ENCODE measurements at regions of chr1 and their contacts with region 1.

Region 1: DNA sequence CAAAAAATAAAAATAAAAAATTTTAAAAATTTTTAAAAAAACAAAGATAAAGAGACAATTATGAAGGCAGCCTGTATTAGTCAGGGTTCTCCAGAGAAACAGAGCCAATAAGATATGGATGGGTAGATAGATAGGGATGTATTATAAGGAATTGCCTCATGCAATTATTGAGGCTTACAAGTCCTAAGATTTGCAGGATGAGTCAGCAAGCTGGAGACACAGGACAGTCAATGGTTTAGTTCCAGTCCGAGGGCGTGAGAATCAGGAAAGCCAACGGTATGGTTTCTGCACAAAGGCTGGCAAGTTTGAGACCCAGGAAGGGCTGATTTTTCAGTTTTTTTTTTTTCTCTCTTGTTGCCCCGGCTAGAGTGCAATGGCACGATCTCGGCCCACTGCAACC is 24.1 kb upstream of the EIF4G3 start:
- DNase-seq: no peak
- ATAC-seq: no peak
- H3K4me3 ChIP-seq: no peak overlapping the region
- H3K27ac ChIP-seq: no peak overlapping the region
- H3K4me1 ChIP-seq: no peaks in the 10 kb centered on the region; the same call in 2 of the 3 replicates
- CTCF ChIP-seq: no peak
- EP300 ChIP-seq: no peak
- POLR2A ChIP-seq: no peak
- RAD21 ChIP-seq: no peak

Region 2: GRCh38 chr1:20981915-20982314 is 218.9 kb before region 1 on chr1:
- CTCF ChIA-PET with region 1: interaction called, 15 read pairs
- POLR2A ChIA-PET with region 1: no interaction called
- DNase-seq: peak in 1 of 2 experiments; percentile 14
- ATAC-seq: peak; percentile 70 to 81; a peak in 5 of 6 replicates
- H3K4me3 ChIP-seq: no peak overlapping the region
- H3K27ac ChIP-seq: no peak overlapping the region
- H3K4me1 ChIP-seq: peaks cover 8% of the 10 kb centered on the region; the same call in 1 of the 3 replicates
- CTCF ChIP-seq: peak; percentile 27; the same call in 2 of the 3 replicates
- EP300 ChIP-seq: no peak
- POLR2A ChIP-seq: no peak
- RAD21 ChIP-seq: peak; percentile 40 to 42; a peak in 4 of 5 replicates

Region 3: DNA sequence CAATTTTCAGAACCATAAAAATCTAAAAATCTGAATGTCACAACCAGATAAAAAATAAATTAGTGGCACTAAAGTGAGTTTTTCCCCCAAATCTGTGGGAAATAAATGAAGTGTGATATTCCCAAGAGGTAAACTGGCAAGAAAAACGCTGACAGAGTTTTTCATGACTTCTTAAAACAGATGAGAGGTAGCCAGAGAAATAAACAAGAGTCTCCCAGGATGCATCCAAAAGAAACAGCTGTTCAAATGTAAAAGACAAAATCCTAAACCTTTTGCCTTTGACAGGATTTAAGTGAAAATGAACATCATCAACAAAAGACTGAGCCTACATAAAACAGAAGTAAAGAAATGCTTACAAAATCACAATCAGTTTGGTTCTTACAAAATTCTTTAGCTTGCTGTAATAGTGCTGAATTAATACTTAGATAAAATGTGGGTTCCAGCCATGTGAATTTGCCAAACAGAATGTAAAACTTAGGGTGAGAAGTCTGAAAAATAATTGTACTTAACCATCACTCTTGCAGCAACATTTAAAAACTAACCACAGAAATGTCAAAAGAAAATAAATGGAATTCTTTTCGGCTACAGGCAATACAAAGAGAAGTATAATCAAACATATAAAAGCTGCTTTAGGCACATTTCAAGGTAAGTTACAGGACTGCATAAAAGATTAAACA is 157.7 kb before region 1 on chr1:
- CTCF ChIA-PET with region 1: no interaction called
- POLR2A ChIA-PET with region 1: no interaction called
- DNase-seq: no peak
- ATAC-seq: no peak
- H3K4me3 ChIP-seq: no peak overlapping the region
- H3K27ac ChIP-seq: no peak overlapping the region
- H3K4me1 ChIP-seq: 0 out of 3 replicates have a peak, but pooled peaks cover 6% of the 10 kb centered on the region
- CTCF ChIP-seq: no peak
- EP300 ChIP-seq: no peak
- POLR2A ChIP-seq: no peak
- RAD21 ChIP-seq: no peak

Region 4: DNA sequence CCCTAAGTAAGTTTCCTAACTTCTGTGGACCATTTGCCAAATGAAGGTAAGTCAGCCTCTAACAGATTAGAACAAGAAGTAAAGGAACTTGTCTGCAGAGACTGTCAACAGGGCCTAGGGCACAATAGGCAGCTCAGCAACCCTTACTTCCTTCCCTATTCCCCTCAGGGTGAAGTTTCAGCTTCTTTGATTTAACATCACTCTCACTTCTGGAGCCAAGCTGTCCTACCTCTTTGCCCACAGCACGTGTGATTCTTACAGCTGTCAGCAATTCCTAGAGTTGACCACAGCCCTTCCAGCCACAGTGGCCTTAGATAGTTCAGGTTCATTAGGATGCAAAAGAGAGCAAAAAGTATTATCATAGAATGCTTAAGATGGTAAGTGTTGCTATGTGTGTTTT is 16.5 kb before region 1 on chr1:
- CTCF ChIA-PET with region 1: interaction called, 18 read pairs
- POLR2A ChIA-PET with region 1: no interaction called
- DNase-seq: no peak
- ATAC-seq: no peak
- H3K4me3 ChIP-seq: no peak overlapping the region
- H3K27ac ChIP-seq: no peak overlapping the region
- H3K4me1 ChIP-seq: no peaks in the 10 kb centered on the region
- CTCF ChIP-seq: no peak
- EP300 ChIP-seq: no peak
- POLR2A ChIP-seq: no peak
- RAD21 ChIP-seq: no peak

Region 5: DNA sequence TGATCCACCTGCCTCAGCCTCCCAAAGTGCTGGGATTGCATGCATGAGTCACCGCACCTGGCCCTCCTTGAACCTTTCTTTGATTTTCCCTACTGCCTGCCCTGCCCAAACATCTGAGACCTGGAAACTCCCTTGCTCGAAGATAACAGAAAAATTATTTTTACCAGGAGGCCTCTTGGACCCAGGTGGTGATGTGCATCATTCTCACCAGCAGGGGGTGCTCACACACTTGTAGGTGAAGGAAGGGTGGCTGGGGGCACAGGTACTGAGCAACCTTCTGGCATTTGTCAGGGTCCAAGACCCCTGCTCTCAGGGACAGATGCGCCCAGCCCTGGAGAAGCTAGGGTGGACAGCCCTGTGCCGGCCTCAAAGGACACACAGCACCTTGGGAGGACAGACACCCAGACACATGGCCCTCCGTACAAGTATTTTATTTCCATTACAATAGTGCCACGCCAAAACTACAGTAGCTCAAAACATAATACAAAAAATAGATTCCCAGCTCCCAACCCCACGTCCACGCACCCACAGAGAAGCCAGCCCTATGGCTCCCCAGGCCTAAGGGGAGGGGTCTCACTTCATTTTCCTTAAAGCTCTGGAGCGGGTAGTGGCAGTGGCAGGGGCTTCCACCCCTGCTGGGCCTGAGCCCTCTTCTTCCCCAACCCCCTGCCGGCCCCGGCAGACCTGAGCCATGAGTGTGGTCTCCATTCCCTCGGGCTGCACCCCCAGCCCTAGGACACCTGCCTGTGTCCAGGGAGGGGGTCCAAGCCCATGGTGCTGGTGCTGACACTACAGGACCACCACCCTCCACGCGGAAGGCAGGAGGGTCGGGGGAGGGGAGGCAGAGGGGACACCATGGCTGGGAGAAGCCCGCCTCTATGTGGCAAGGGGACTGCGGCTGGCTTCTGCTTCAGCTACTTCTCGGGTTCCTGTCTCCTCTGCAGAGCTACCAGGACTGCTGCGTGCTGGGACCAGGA is 16.4 kb after region 1 on chr1:
- CTCF ChIA-PET with region 1: interaction called, 12 read pairs
- POLR2A ChIA-PET with region 1: no interaction called
- DNase-seq: peak; percentile 14 to 60
- ATAC-seq: peak; percentile 57 to 71; a peak in 4 of 6 replicates
- H3K4me3 ChIP-seq: no peak overlapping the region
- H3K27ac ChIP-seq: no peak overlapping the region
- H3K4me1 ChIP-seq: peaks cover 2% of the 10 kb centered on the region; the same call in 2 of the 3 replicates
- CTCF ChIP-seq: peak; percentile 61
- EP300 ChIP-seq: no peak
- POLR2A ChIP-seq: no peak
- RAD21 ChIP-seq: peak; percentile 44 to 63; a peak in 3 of 5 replicates